Mammary epithelial cell (primary cell): ENCODE measurements at regions of chr7 and their contacts with region 1.

Region 1: DNA sequence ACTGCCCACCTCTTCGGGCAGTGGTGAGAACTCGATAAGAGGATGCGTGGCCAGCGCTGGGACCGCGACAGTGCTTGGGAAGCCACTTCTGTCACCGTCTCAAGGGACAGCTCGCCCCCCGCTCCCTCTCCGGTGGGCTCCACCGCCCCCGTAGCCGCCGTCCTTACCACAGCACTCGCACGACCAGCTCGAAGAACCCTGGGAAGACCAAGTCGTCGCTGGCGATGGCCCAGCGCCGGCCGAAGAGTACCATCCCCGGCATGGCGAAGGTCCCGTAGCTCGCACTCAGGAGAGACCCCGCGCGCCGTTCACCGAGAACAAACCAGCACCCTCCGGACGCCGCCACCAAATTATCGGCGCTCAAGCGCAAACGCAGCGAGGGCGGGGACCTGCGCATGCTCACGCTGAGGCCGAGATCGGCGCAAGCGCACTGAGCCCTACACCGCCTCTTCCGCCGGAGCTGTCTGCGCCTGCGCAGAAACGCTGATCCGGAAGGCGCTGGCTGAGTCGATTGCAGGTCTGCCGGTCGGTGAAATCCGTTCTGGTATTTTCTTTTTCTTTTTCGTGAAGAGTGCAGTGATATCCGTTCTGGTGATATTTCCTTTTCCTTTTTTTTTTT is at the start of gene DAGLB:
- DNase-seq: peak; percentile 87
- H3K4me3 ChIP-seq: peak within 1 kb of the TSS; percentile 80 to 95 (median 91)
- H3K27ac ChIP-seq: peak within 1 kb of the TSS; percentile 92
- H3K4me1 ChIP-seq: peaks cover 16% of the 10 kb centered on the region
- H3K27me3 ChIP-seq: no peaks in the 10 kb centered on the region
- CTCF ChIP-seq: no peak
- total RNA-seq, gene DAGLB: 20.7 to 22.1 TPM

Region 2: DNA sequence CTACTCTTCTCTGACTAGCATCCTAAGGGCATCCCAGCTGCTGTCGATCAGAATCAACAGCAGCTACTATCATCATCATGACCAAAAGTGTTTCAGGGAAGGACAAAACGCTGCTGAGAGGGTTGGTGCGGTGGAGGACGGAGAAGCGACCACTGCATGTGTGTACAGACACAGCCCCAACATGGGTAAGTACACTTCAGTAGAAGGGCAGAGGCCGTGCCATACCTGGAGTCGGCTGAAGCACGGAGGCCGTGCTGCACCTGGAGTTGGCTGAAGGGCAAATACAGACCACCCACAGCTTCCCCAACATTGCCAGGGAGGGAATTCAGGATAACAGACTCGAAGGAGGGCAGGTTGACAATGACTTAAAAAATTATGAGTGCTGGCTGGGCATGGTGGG is 107.4 kb before region 1 on chr7:
- CTCF ChIA-PET with region 1: no interaction called
- dilution Hi-C with region 1: loop called (anchors 5 kb)
- in situ Hi-C with region 1: no loop called
- intact Hi-C with region 1: no loop called
- DNase-seq: no peak
- H3K4me3 ChIP-seq: no peak overlapping the region
- H3K27ac ChIP-seq: no peak overlapping the region
- H3K4me1 ChIP-seq: no peaks in the 10 kb centered on the region
- H3K27me3 ChIP-seq: no peaks in the 10 kb centered on the region
- CTCF ChIP-seq: no peak

Region 3: GRCh38 chr7:6385110-6385971 is 62.3 kb before region 1 on chr7:
- CTCF ChIA-PET with region 1: no interaction called
- dilution Hi-C with region 1: loop called (anchors 10 kb)
- in situ Hi-C with region 1: no loop called
- intact Hi-C with region 1: no loop called
- DNase-seq: peak; percentile 97
- H3K4me3 ChIP-seq: no peak overlapping the region
- H3K27ac ChIP-seq: peak overlapping the region; percentile 92
- H3K4me1 ChIP-seq: peaks cover 27% of the 10 kb centered on the region
- H3K27me3 ChIP-seq: no peaks in the 10 kb centered on the region
- CTCF ChIP-seq: no peak

Region 4: DNA sequence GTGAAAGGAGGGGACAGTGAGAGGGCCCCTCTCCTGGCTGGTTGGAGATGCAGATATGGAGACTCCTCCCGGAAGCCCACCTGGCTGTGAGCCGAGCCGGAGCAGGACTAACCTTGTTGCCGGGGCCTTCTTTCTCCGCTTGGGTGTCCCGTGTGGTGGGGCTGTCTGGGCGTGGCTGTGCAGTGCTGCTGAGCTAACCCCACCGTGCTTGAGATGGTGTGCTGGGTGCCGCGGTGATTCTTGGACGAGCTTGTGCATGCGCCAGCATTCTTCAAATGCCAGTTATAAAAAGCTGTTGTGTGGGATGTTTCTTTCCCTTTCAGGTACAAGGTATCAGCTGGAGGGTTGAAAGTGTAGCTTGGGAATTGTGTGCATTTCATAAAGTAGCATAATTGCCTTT is 48.7 kb before region 1 on chr7:
- CTCF ChIA-PET with region 1: no interaction called
- dilution Hi-C with region 1: no loop called
- in situ Hi-C with region 1: no loop called
- intact Hi-C with region 1: loop called (anchors 1 kb)
- DNase-seq: peak; percentile 80
- H3K4me3 ChIP-seq: peak overlapping the region; percentile 24 to 38 (median 32)
- H3K27ac ChIP-seq: peak overlapping the region; percentile 70
- H3K4me1 ChIP-seq: peaks cover 45% of the 10 kb centered on the region
- H3K27me3 ChIP-seq: no peaks in the 10 kb centered on the region
- CTCF ChIP-seq: no peak